Heart left ventricle (tissue), 16 donors: ENCODE measurements at regions of chr3 and their contacts with region 1.

Region 1: DNA sequence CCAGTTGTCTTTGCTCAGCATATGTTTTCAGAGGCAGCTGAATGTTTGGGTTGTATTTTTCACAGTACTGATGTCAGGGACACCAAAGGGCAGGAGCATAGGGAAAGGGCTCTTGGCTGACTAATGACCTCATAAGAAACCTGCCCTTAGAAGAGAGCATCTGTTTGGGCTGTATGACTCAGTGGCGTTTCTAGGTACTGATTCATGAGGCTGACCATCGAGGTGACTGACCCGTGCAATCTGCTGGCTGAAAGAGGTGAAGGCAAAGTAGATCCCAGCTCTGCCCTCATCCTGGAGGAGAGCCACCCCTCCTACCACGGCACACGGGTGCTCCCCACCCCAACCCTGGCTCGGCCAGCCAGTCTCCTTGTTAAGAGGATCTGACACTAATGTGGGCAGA is 8.3 kb downstream of the LMCD1 start:
- DNase-seq: no peak
- ATAC-seq: peak in 2 of 4 donors; percentile 7 to 21
- H3K4me3 ChIP-seq: no peak overlapping the region
- H3K27ac ChIP-seq: peak overlapping the region in 2 of 12 donors; percentile 6 to 33
- H3K4me1 ChIP-seq: peaks cover 8 to 63% (median 41%) of the 10 kb centered on the region in 12 donors
- H3K27me3 ChIP-seq: no peaks in the 10 kb centered on the region
- CTCF ChIP-seq: no peak
- POLR2A ChIP-seq: no peak

Region 2: GRCh38 chr3:8548502-8549275 is 38.7 kb after region 1 on chr3:
- intact Hi-C with region 1: loop called in 2 of 10 experiments (anchors 5 kb)
- DNase-seq: no peak
- ATAC-seq: no peak
- H3K4me3 ChIP-seq: no peak overlapping the region
- H3K27ac ChIP-seq: no peak overlapping the region
- H3K4me1 ChIP-seq: peaks cover 0 to 46% (median 16%) of the 10 kb centered on the region in 12 donors
- H3K27me3 ChIP-seq: no peaks in the 10 kb centered on the region
- CTCF ChIP-seq: no peak
- POLR2A ChIP-seq: no peak

Region 3: DNA sequence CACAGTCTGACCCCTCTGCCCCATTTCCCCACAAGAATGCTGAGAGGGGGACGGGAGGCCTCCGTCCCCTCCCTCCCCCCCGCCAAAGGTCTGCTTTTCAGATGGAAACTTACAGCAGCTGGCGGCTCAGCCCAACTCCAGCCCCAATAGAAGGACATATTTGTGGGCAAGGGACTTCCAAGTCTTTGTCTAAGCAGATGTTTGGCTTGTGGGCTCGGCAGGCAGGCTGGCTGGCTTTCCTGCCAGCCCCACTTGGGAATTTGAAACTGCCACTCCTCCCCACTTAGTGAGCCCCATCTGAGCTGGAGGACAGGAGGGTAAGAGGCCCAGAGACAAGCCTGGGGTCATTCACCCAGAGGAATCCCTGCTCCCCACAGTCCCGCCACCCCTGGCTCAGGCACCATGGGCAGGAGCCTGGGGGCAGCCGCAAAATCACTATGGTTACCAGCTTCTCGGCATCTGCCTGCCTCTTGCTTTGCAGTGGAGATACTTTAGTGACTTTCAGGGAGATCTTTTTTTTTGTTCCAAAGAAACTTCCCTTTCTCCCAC is 45.2 kb after region 1 on chr3:
- intact Hi-C with region 1: loop called in 1 of 10 experiments (anchors 5 kb)
- DNase-seq: peak in 4 of 5 donors; percentile 40 to 80 (median 43)
- ATAC-seq: peak in 3 of 4 donors; percentile 22 to 39 (median 32)
- H3K4me3 ChIP-seq: no peak overlapping the region
- H3K27ac ChIP-seq: peak overlapping the region in 11 of 12 donors; percentile 0 to 76 (median 52)
- H3K4me1 ChIP-seq: peaks cover 6 to 97% (median 49%) of the 10 kb centered on the region in 12 donors
- H3K27me3 ChIP-seq: no peaks in the 10 kb centered on the region
- CTCF ChIP-seq: no peak
- POLR2A ChIP-seq: no peak